Endothelial cell of umbilical vein (primary cell): ENCODE measurements at regions of chr1 and their contacts with region 1.

Region 1: DNA sequence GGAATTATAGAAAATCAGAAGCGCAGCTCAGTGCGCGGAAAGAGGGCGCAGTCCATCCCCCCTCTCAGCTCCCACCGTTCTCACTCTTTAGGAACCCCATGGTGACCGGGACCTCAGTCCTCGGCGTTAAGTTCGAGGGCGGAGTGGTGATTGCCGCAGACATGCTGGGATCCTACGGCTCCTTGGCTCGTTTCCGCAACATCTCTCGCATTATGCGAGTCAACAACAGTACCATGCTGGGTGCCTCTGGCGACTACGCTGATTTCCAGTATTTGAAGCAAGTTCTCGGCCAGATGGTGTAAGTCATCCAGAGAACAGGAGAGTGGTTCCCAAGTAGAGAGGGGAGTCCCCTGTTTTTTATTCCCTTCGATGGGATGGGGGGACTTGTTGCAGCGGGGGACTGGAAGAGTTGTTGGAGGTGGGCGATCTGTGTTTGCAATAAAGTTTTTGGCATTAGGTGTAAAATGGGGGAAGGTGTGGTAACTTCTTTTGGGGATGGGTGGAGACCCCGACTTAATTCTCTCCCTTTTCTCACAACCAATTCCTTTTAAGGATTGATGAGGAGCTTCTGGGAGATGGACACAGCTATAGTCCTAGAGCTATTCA is 620 bp downstream of the PSMB4 start:
- DNase-seq: no peak
- H3K4me3 ChIP-seq: peak overlapping the region; percentile 52 to 66 (median 57)
- H3K27ac ChIP-seq: peak overlapping the region; percentile 79
- H3K4me1 ChIP-seq: peaks cover 6% of the 10 kb centered on the region
- H3K27me3 ChIP-seq: no peaks in the 10 kb centered on the region
- CTCF ChIP-seq: no peak
- POLR2A ChIP-seq: no peak

Region 2: DNA sequence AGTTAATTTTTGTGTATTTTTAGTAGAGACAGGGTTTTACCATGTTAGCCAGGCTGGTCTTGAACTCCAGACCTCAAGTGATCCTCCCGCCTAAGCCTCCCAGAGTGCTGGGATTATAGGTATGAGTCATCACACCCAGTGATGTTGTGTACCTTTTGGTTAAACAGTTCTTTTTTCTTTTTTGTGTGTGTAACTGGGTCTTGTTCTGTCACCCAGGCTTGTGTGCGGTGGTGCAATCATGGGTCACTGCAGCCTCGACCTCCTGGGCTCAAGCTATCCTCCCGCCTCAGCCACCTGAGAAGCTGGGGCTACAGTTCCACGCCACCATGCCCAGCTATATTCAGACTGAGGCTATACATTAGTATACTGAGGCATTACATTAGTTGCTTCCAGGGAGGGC is 291.7 kb before region 1 on chr1:
- CTCF ChIA-PET with region 1: no interaction called
- POLR2A ChIA-PET with region 1: no interaction called
- dilution Hi-C with region 1: no loop called
- intact Hi-C with region 1: no loop called
- DNase-seq: no peak
- H3K4me3 ChIP-seq: no peak overlapping the region
- H3K27ac ChIP-seq: no peak overlapping the region
- H3K4me1 ChIP-seq: peaks cover 10% of the 10 kb centered on the region
- H3K27me3 ChIP-seq: no peaks in the 10 kb centered on the region
- CTCF ChIP-seq: no peak
- POLR2A ChIP-seq: no peak

Region 3: DNA sequence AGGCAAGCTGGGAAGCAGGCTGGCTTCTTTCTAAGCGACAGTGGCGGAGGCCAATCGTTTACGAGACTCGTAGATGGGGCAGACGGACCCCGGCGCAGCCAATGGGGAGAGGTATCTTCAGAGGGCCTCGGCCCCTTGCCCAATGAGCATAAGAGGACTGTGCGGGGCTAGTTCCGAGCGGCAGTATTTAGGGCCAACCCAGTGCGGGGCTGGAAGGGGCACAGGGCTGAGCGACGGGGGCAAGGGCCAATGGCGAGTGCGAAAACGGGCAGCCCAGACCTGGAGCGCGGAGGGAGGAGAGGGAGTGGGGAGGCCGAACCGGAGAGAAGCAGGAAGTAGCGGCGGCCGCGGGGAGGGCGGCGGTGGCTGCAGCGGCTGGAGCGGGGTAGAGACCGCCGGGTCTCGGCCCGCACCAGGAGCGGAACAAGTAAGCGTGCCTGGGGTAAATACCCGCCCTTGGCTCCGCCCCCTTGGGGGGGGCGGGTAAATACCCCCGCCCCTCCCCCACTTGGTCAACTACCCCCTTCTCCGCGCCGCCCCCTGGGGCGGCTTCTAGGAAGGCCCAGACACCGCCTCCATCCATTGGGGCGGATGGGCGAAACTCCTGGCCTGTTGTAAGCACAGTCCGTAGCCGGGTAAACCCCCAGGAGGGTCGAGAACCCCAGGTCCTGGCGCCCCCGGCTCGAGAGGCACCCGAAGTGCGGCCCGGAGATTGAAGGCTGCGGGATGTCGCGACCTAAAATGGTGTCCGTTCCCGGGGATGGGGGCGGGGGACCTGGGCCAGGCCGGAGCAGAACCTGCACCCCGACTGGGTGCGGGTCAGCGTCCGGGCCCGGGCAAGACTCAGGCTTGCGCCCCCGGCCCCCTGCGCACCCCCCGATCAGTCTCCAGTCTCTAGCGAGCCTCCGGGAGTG is 117.8 kb before region 1 on chr1 and contains the start of gene ZNF687:
- CTCF ChIA-PET with region 1: interaction called, 3 read pairs
- POLR2A ChIA-PET with region 1: no interaction called
- dilution Hi-C with region 1: no loop called
- intact Hi-C with region 1: loop called (anchors 1 kb)
- DNase-seq: peak; percentile 100
- H3K4me3 ChIP-seq: peak within 1 kb of the TSS; percentile 66 to 89 (median 69)
- H3K27ac ChIP-seq: peak within 1 kb of the TSS; percentile 81
- H3K4me1 ChIP-seq: peaks cover 9% of the 10 kb centered on the region
- H3K27me3 ChIP-seq: peaks cover 0 to 2% of the 10 kb centered on the region in 2 experiments
- CTCF ChIP-seq: no peak
- POLR2A ChIP-seq: peak; percentile 76
- total RNA-seq, gene ZNF687: 15.5 and 17.9 TPM in 2 replicates

Region 4: DNA sequence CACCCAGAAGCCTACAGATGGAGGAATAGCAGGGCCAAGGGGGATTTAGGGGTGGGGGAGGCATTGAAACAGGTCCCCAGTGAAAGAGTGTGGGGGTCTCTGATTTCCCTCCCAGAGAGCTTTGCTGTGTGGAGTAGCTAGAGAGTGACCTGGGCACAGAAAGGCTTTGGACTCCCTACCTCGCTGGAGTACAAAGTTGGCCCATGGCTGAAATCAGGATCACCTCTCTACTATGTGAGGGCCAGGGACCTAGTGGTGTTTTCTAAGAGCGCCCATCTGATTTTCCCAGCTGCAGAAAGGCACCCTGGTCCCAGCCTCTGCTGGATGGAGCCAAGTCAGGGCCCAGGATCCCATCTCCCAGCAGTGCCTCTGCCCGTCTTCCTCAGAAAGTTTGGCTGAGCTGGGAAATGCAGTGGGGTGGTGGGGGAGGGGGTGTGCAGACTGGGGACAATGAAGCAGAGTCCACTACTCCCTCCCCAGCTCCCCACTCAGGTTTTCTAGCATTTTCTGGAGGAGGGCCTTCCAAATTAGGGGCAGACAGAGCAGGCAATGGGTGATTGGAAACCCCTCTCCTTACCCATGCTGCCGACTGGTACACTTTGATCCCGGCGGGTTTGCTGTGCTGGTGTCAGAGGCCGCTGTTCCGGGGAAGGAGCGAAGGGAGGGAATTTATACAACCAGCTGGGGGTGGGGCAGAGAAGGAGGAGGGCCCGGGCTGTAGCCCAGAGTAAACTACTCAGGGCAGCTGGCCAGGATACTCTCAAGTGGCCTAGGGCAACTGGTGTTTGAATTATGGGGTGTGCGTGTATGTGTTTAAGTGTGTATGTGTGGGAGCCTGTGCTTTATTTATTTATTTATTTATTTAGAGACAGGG is 27.7 kb before region 1 on chr1 and contains the start of gene SELENBP1:
- CTCF ChIA-PET with region 1: interaction called, 4 read pairs
- POLR2A ChIA-PET with region 1: interaction called, 4 read pairs
- dilution Hi-C with region 1: no loop called
- intact Hi-C with region 1: loop called (anchors 2 kb)
- DNase-seq: peak; percentile 64
- H3K4me3 ChIP-seq: peak within 1 kb of the TSS in 1 of 3 experiments; percentile 29
- H3K27ac ChIP-seq: no peak within 1 kb of the TSS
- H3K4me1 ChIP-seq: peaks cover 8% of the 10 kb centered on the region
- H3K27me3 ChIP-seq: no peaks in the 10 kb centered on the region
- CTCF ChIP-seq: no peak
- POLR2A ChIP-seq: peak; percentile 52
- total RNA-seq, gene SELENBP1: 12.4 and 18.0 TPM in 2 replicates